SK-N-SH (cell line): ENCODE measurements at regions of chr17 and their contacts with region 1.

Region 1: DNA sequence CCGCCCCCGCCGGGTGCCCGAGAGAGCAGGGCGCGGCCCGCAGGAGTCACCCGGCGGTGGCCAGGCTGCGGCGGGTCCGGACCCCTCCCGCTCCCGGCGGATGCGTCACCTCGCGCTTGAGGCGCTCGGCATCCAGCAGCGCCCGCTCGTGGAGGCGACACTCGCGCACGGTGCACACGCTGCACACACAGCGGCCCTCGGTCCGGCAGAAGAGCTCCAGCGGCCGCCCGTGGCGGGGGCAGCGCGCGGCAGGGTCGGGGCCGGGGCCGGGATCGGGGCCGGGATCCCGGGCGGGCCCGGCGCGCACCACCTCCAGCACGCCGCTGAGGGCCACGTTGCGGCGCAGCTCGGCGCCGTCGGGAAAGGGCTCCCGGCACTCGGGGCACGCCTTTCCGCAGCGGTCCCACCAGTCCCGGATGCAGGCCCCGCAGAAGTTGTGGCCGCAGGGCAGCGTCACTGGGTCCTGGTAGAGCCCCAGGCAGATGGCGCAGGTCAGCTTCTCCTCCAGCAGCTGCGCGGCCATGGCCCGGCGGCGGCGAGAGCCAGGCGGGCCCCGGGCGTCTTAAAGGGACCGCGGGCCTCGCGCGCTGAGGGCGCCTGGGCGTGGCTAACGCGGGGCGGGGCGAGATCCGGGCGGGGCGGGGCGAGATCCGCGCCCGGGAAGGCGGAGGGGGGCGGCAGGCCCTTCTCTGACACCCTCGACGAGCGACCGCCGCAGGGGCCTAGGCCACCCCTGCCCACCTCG is at the start of gene TRIM65:
- DNase-seq: peak; percentile 98
- H3K4me3 ChIP-seq: peak within 1 kb of the TSS; percentile 73 to 76
- H3K27ac ChIP-seq: peak within 1 kb of the TSS; percentile 69 to 91
- H3K4me1 ChIP-seq: peaks cover 9 to 13% of the 10 kb centered on the region in 2 experiments; a peak in 3 of 4 replicates
- H3K27me3 ChIP-seq: no peaks in the 10 kb centered on the region
- CTCF ChIP-seq: peak; percentile 43
- EP300 ChIP-seq: no peak
- RAD21 ChIP-seq: peak; percentile 32
- polyA plus RNA-seq, gene TRIM65: 13.1 and 18.1 TPM in 2 replicates

Region 2: DNA sequence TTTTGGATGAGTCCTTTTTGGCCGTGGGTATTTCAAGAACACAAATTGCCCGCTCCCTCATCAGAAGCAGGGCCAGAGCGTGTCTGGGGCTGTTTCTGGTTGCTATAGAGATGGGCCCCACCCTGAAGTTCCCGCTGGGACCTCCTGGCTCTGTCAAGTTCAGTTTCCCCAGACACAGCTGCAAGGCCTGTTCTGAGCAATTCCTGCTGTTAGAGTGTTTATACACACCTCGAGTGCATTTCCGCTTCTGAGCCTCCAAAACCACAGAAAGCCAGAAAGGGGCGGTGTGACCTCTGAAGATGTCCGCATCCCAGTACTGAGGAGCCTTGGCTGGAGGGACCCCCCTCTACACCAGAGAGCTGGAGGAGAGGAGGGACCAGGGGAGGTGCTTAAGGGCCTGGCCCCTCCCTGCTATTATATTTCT is 32.1 kb before region 1 on chr17:
- CTCF ChIA-PET with region 1: interaction called, 30 read pairs
- POLR2A ChIA-PET with region 1: no interaction called
- DNase-seq: peak; percentile 35
- H3K4me3 ChIP-seq: no peak overlapping the region
- H3K27ac ChIP-seq: no peak overlapping the region
- H3K4me1 ChIP-seq: no peaks in the 10 kb centered on the region; a peak in 1 of 4 replicates
- H3K27me3 ChIP-seq: no peaks in the 10 kb centered on the region
- CTCF ChIP-seq: no peak
- EP300 ChIP-seq: no peak
- RAD21 ChIP-seq: no peak

Region 3: DNA sequence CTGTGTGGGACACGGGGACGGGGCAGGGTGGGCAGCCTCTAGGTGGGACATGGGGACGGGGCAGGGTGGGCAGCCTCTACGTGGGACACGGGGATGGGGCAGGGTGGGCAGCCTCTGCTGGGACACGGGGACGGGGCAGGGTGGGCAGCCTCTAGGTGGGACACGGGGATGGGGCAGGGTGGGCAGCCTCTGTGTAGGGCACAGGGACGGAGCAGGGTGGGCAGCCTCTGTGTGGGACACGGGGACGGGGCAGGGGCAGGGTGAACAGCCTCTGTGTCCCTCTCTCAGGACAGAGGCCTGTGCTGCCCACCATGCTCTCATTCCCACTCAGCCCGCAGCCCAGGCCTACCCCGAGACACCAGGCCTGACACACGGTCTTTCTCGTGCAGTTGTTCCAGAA is 25.0 kb after region 1 on chr17:
- CTCF ChIA-PET with region 1: no interaction called
- POLR2A ChIA-PET with region 1: no interaction called
- DNase-seq: no peak
- H3K4me3 ChIP-seq: no peak overlapping the region
- H3K27ac ChIP-seq: no peak overlapping the region
- H3K4me1 ChIP-seq: no peaks in the 10 kb centered on the region
- H3K27me3 ChIP-seq: no peaks in the 10 kb centered on the region
- CTCF ChIP-seq: no peak
- EP300 ChIP-seq: no peak
- RAD21 ChIP-seq: no peak